ENCODE measurements at regions of chr6 and their contacts with region 1.

Region 1: GRCh38 chr6:43263314-43264178 is 20.3 kb downstream of the TTBK1 start:
- H3K4me3 ChIP-seq: no peak overlapping the region
- H3K27ac ChIP-seq: no peak overlapping the region
- H3K4me1 ChIP-seq: no peaks in the 10 kb centered on the region
- CTCF ChIP-seq: peak; percentile 88

Region 2: GRCh38 chr6:43396407-43397149 is 133.0 kb after region 1 on chr6:
- CTCF ChIA-PET with region 1: interaction called, 11 read pairs
- POLR2A ChIA-PET with region 1: no interaction called
- H3K4me3 ChIP-seq: no peak overlapping the region
- H3K27ac ChIP-seq: no peak overlapping the region
- H3K4me1 ChIP-seq: no peaks in the 10 kb centered on the region
- CTCF ChIP-seq: no peak

Region 3: DNA sequence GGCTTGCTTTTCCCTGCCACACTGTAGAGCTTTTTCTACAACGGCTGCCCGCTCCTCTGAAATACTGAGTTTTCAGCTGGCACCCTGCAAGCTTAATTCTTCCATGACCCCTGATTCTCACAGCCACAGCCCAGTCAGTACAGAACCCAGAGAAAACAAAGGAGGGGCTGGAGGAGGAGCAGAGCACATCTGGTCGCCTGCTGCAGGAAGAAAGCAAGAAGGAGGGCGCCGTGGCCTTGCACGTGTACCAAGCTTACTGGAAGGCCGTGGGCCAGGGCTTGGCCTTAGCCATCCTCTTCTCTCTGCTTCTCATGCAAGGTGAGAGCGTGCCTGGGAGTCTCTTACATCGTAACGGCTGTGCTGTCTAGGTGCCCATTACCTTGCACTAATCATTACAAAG is 180.5 kb after region 1 on chr6:
- CTCF ChIA-PET with region 1: interaction called, 3 read pairs
- POLR2A ChIA-PET with region 1: interaction called, 11 read pairs
- H3K4me3 ChIP-seq: no peak overlapping the region
- H3K27ac ChIP-seq: no peak overlapping the region
- H3K4me1 ChIP-seq: no peaks in the 10 kb centered on the region
- CTCF ChIP-seq: no peak

Region 4: DNA sequence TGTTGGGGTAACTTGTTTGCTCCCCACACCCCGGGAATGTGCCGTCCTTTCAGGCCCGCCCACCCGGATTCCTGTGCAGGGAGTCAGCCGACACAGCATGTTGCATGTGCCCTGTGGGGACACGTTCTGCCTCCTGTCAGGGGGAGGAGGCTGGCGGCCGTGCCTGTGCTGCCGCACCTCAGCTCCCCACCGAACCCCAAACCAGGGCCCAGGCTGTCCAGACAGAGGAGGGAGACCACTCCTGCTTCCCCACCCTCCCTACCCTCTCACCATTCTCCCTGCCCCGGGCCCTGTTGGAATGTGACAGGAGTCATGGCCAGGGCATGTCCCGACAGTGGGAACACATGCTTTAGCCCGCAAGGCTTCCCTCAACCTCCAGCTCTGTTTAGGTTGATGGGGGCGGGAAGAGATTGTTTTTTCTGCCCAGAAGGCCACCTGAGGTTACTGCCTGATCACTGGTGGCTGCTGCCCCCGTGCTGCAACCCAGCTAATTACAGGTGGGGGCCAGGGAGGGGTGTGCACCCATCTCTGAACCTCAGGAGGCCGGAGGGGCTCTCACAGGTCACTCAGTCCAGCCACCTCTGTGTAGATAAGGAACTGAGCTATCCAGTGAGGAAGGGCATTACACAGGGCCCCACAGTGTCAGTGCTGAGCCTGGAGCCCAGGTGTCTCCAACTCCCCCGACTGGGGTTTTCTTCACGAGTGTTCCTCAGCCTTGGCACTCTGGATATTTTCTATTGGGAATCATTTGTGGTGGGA is 233.0 kb after region 1 on chr6:
- CTCF ChIA-PET with region 1: interaction called, 16 read pairs
- POLR2A ChIA-PET with region 1: no interaction called
- H3K4me3 ChIP-seq: no peak overlapping the region
- H3K27ac ChIP-seq: no peak overlapping the region
- H3K4me1 ChIP-seq: peaks cover 7% of the 10 kb centered on the region
- CTCF ChIP-seq: 0 out of 2 replicates have a peak, but pooled peaks have one; percentile 22

Region 5: GRCh38 chr6:43758617-43759050 is 495.1 kb after region 1 on chr6:
- CTCF ChIA-PET with region 1: no interaction called
- POLR2A ChIA-PET with region 1: no interaction called
- H3K4me3 ChIP-seq: no peak overlapping the region
- H3K27ac ChIP-seq: no peak overlapping the region
- H3K4me1 ChIP-seq: no peaks in the 10 kb centered on the region; the same call in 1 of the 2 replicates
- CTCF ChIP-seq: peak; percentile 30; the same call in 1 of the 2 replicates

Measured in HEK293 (cell line).